IMR-90 (cell line): ENCODE measurements at regions of chr3 and their contacts with region 1.

Region 1: GRCh38 chr3:195271116-195271858 is at the start of gene XXYLT1:
- DNase-seq: peak; percentile 80
- ATAC-seq: peak; percentile 89
- H3K4me3 ChIP-seq: peak within 1 kb of the TSS; percentile 93
- H3K27ac ChIP-seq: peak within 1 kb of the TSS; percentile 86
- H3K4me1 ChIP-seq: peaks cover 5% of the 10 kb centered on the region
- H3K27me3 ChIP-seq: no peaks in the 10 kb centered on the region
- CTCF ChIP-seq: peak; percentile 98
- POLR2A ChIP-seq: 0 out of 2 replicates have a peak, but pooled peaks have one; percentile 22
- RAD21 ChIP-seq: peak; percentile 89
- total RNA-seq, gene XXYLT1: 13.1 and 14.7 TPM in 2 replicates

Region 2: DNA sequence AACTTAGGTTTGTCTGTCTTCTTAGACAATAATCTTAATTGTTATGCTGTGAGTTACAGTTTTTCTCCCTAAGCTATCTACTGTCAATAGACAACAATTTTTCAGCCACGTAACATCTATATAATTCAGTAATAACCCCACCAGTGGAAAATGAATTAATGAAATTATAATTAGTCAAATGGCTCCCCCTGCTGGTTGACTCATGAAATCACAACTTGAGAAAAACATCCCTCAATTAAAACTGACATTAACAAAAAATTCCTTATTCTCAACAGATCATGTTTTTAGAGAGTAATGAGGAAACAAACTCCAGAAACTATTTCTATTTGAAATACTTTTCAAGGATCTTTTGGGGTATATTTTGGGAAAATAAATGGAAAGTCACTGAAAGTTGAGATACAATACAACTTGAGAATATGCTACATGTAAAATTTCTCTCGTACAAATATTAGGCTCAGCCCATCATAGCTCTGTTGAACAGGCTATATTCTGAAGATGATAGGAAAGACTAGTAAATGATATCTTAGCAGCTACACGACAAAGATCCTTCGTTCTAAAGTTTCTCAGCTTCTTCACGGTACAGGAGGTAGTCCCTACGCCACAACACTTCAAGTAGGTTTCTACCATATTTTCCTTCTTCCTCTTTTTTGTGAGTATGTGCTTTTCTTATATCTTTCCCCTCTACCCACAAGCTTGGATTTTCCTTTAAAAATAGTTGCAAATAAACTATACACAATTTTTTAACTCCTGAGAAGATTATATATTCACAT is 251.2 kb after region 1 on chr3:
- CTCF ChIA-PET with region 1: interaction called, 24 read pairs
- POLR2A ChIA-PET with region 1: no interaction called
- dilution Hi-C with region 1: no loop called
- in situ Hi-C with region 1: loop called (anchors 5 kb)
- intact Hi-C with region 1: loop called (anchors 1 kb)
- DNase-seq: peak; percentile 35
- ATAC-seq: peak; percentile 59
- H3K4me3 ChIP-seq: no peak overlapping the region
- H3K27ac ChIP-seq: no peak overlapping the region
- H3K4me1 ChIP-seq: no peaks in the 10 kb centered on the region
- H3K27me3 ChIP-seq: no peaks in the 10 kb centered on the region
- CTCF ChIP-seq: peak; percentile 77
- POLR2A ChIP-seq: no peak
- RAD21 ChIP-seq: peak; percentile 73